HEK293 (cell line): ENCODE measurements at regions of chr3 and their contacts with region 1.

Region 1: DNA sequence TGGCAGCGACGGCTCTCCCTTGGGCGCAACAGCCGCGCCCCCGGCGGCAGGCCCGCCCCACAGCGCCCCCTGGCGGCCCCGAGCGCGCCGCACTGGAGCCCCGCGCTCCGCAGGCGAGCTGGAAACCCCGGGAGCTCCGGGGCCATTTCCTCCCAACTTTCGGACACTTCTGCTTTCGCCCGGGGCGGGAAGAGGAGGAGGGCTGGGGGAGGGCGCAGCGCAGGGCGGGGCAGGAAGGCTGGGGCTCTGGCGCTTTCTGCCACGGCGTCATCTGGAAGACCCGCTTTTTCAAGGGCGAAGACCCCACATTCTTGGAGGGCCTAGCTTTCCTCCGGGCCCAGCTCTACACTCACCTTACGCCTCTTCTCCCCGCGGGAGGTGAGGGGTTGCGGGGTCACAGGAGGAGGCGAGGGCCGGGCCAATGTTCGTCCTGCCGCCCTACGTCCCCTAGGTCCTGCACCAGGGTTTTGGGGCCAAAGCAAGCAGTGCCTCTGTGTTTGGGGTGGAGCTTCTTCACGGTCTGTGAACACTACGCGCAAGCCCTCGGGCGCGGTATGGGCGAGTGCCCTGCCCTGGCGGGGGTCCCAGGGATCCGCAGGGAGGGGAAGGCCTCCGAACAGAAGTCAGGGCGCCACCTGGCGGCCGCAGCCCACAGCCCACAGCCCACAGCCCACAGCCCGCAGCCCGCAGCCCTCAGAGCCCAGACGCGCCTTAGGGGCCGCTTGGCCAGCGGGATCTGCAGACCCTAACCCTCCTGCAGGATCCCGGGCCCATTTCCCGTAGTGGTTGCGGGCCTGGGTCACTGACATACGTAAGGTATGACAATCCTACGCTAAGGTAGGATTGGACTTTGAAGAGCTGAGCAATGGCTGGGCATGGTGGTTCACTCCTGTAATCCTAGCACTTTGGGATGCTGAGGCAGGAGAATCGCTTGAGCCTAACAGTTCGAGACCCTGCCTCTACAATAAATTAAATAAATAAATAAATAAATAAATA is 31.1 kb downstream of the FOXL2 start:
- H3K4me3 ChIP-seq: peak overlapping the region; percentile 88
- H3K27ac ChIP-seq: peak overlapping the region; percentile 68; the same call in 1 of the 2 replicates
- H3K4me1 ChIP-seq: no peaks in the 10 kb centered on the region
- CTCF ChIP-seq: peak; percentile 89

Region 2: DNA sequence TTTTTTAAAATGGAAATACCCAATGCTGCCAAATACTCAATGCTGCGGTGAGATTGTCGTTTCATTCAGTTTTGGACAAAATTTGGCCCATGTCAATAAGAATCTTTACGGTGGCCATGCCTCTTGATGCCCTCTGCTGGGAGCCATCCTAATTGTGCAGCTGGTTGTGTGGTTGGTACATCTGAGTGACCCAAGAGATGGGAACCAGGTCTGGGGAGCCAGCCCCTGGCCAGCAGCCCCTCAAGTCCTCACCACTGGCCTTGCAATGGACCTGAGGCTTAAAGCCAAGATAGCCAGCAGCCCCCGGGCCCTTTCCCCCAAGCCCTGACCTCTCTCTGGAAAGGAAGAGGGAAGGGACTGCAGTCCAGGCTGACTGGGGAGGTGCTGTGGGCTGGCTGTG is 517.8 kb before region 1 on chr3:
- CTCF ChIA-PET with region 1: no interaction called
- POLR2A ChIA-PET with region 1: no interaction called
- H3K4me3 ChIP-seq: no peak overlapping the region
- H3K27ac ChIP-seq: no peak overlapping the region
- H3K4me1 ChIP-seq: no peaks in the 10 kb centered on the region
- CTCF ChIP-seq: no peak

Region 3: DNA sequence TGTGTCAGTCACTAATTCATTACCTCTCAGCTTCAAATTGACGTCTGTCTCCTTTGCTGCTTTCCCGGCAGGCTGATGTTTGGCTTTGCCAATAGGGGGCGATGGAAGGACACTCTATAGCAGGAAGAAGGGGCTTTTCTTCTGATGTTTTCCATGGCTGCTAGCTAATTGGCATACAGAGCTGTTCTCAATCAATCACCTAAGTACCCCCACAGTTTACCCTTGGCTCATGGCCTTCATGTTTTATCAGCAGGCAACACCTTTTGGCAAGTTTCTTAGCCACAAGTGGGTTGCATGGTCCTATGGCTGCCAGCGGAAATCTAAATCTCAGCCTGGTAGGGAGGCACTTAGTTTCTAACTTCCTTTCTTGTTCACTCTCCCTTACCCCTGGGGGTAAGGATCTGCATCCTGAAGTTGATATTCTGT is 436.4 kb before region 1 on chr3:
- CTCF ChIA-PET with region 1: interaction called, 14 read pairs
- POLR2A ChIA-PET with region 1: no interaction called
- H3K4me3 ChIP-seq: no peak overlapping the region
- H3K27ac ChIP-seq: no peak overlapping the region
- H3K4me1 ChIP-seq: no peaks in the 10 kb centered on the region
- CTCF ChIP-seq: no peak; the same call in 1 of the 2 replicates

Region 4: GRCh38 chr3:138600100-138600745 is 315.6 kb before region 1 on chr3:
- CTCF ChIA-PET with region 1: interaction called, 47 read pairs
- POLR2A ChIA-PET with region 1: interaction called, 23 read pairs
- H3K4me3 ChIP-seq: no peak overlapping the region
- H3K27ac ChIP-seq: no peak overlapping the region
- H3K4me1 ChIP-seq: no peaks in the 10 kb centered on the region
- CTCF ChIP-seq: no peak

Region 5: GRCh38 chr3:138705675-138706074 is 210.1 kb before region 1 on chr3:
- CTCF ChIA-PET with region 1: interaction called, 66 read pairs
- POLR2A ChIA-PET with region 1: no interaction called
- H3K4me3 ChIP-seq: no peak overlapping the region
- H3K27ac ChIP-seq: no peak overlapping the region
- H3K4me1 ChIP-seq: no peaks in the 10 kb centered on the region
- CTCF ChIP-seq: no peak

Region 6: DNA sequence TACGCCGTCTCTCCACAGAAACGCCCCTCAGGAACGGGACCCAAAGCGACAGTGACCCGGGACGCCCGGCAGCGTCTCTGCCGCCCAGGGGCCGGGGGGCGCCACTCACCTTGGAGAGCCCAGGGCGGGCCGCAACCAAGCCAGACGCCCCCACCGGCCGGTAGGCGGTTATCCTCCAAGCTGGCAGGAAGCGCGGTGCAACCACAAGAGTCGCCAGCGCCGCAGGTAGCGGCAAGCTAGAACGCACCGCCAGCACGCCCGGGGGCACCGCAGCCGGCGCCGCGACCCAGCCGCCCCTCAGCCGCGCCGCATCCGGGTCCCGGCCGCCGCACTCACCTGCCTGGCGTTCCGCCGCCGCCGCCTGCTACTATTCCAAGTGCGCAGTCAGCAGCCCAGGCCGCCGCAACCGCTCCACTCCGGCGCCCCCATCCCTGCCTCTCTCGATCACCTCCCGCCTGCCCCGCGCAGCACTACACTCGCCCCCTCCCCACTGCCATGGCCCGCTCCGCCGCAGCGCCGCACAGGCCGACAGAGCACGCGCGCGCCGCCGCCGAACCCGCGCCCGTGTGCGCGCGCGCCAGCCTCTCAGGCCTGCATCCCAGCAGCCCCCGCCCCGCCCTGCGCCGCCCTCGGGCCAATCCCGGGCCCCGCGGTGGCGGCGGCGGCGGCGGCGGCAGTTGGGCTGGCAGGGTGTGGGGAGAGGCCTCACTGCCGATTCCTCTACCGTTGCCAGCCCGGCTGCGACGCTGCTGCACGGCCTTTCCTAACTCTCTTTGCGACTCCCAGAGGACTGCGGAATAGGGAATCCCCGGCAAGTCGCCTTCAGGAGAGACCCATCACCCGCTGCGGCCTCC is 81.2 kb before region 1 on chr3 and contains the start of gene PIK3CB:
- CTCF ChIA-PET with region 1: interaction called, 8 read pairs
- POLR2A ChIA-PET with region 1: interaction called, 15 read pairs
- H3K4me3 ChIP-seq: peak within 1 kb of the TSS; percentile 91
- H3K27ac ChIP-seq: peak within 1 kb of the TSS; percentile 85
- H3K4me1 ChIP-seq: no peaks in the 10 kb centered on the region
- CTCF ChIP-seq: peak; percentile 94

Region 7: GRCh38 chr3:138875754-138876664 is 39.8 kb before region 1 on chr3:
- CTCF ChIA-PET with region 1: interaction called, 10 read pairs
- POLR2A ChIA-PET with region 1: no interaction called
- H3K4me3 ChIP-seq: no peak overlapping the region
- H3K27ac ChIP-seq: no peak overlapping the region
- H3K4me1 ChIP-seq: no peaks in the 10 kb centered on the region
- CTCF ChIP-seq: no peak

Region 8: GRCh38 chr3:138935848-138936740 is 20.3 kb after region 1 on chr3:
- CTCF ChIA-PET with region 1: interaction called, 19 read pairs
- POLR2A ChIA-PET with region 1: interaction called, 15 read pairs
- H3K4me3 ChIP-seq: peak overlapping the region; percentile 49
- H3K27ac ChIP-seq: no peak overlapping the region
- H3K4me1 ChIP-seq: no peaks in the 10 kb centered on the region
- CTCF ChIP-seq: peak; percentile 88

Region 9: GRCh38 chr3:139074565-139075115 is 158.8 kb after region 1 on chr3:
- CTCF ChIA-PET with region 1: no interaction called
- POLR2A ChIA-PET with region 1: no interaction called
- H3K4me3 ChIP-seq: no peak overlapping the region
- H3K27ac ChIP-seq: no peak overlapping the region
- H3K4me1 ChIP-seq: no peaks in the 10 kb centered on the region
- CTCF ChIP-seq: no peak